ENCODE measurements at regions of chr20 and their contacts with region 1.

Region 1: DNA sequence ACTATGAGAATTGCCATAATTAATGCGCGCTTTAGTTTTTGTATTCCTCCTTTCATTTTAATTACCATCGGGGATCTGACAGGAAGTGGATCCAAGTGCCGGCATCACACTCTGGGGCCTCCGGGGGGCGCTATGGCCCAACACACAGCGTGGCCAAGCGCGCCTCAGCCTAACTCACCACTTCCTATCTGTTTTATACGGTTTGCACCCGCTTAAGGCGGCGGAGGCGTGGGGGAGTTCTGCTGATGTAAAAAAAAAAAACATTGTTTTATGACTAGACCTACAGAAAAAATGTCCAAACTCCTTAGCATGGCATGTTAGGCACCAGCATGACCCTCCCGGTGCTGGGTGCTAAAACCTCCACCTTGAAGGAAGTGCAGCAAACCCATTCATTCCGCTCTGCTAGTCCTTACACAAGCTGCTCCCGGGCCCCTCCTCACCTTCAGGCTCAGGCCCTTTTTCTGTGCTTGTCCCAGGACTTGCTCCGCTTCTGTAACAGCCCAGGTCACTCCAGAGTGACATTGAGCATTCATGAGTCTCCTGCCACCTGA is 4.5 kb upstream of the EBF4 start:
- DNase-seq: peak; percentile 3
- H3K4me3 ChIP-seq: no peak overlapping the region
- CTCF ChIP-seq: peak; percentile 78

Region 2: DNA sequence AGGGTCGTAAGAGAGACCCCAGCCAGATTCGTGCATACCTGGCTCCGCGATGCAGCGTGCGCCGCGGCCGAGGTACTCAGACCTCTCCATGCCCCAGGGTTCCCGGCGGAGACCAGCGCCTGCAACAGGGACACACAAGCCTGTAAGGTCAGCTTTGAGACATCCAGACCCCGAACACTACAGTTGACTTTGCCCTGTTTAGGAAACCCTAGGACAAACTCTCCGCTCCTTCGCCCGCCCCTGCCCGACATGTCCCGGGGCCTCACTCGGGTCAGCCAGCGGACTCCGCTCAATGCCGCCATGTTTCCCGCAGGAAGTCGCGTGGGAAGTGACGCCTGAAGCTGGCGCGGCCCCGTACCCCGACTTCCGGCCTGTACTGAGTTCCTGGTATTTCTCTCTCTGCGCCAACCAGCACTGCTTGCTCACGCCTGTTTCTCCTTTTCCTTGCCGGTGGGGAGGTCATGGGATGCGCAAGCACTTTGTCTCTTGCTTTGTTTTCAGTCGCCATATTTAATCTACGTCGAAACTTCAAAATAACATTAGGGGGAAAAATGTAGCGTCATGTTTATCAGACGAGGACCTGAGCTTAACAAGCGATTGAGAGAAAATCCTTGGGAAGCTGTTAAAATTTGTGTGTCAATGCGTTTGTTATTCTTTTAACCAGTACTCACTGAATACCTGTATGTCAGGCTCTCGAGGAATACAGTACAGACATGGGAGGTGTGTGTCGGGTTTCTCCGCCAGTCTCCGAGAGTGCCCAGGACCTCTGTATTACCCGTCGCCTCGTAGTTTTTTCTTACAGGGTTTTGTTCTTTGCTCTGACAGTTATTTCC is 24.0 kb before region 1 on chr20 and contains the start of gene IDH3B:
- CTCF ChIA-PET with region 1: interaction called, 13 read pairs
- POLR2A ChIA-PET with region 1: no interaction called
- DNase-seq: peak; percentile 49
- H3K4me3 ChIP-seq: peak within 1 kb of the TSS; percentile 95
- CTCF ChIP-seq: no peak